Heart right ventricle (tissue), 16 donors: ENCODE measurements at regions of chr1 and their contacts with region 1.

Region 1: DNA sequence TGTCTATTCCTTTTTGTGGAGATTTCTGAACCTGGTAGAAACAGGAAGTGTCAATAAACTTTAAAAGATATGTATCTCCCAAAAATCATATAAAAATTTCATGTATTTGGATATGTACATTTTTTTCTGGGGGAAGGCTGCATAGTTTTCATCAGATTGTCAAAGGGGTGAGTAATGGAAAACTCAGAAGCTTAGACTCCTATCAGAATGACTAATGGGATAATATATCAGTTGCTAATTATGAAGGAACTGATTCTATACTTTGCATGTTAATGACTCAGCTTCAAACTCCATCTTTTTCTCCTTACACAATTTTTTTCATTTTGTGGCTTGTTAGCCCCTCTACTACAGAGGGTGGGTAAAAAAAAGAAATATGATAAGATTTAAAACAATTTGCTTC is 55.9 kb downstream of the GON4L start:
- DNase-seq: no peak
- ATAC-seq: no peak
- H3K4me3 ChIP-seq: no peak overlapping the region
- H3K27ac ChIP-seq: peak overlapping the region in 1 of 10 donors; percentile 14
- H3K4me1 ChIP-seq: peaks cover 0 to 5% (median 0%) of the 10 kb centered on the region in 9 donors
- H3K27me3 ChIP-seq: no peaks in the 10 kb centered on the region
- CTCF ChIP-seq: no peak

Region 2: DNA sequence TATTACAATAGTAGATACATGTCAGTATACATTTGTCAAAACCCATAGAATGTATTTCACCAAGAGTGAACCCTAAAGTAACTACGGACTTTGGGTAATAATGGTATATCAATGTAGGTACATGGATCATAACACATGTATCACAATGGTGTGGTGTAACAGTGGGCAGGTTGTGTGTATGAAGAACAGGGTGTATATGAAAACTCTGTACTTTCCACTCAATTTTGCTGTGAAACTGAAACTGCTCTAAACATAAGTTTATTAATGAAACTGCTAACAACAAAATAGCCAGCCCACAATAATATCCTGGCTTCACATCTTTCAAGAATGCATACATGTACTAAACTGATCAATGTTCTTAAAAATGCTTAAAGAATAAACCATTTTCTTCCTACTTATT is 390.2 kb before region 1 on chr1:
- intact Hi-C with region 1: no loop called
- DNase-seq: no peak
- ATAC-seq: no peak
- H3K4me3 ChIP-seq: no peak overlapping the region
- H3K27ac ChIP-seq: no peak overlapping the region
- H3K4me1 ChIP-seq: no peaks in the 10 kb centered on the region
- H3K27me3 ChIP-seq: no peaks in the 10 kb centered on the region
- CTCF ChIP-seq: no peak

Region 3: GRCh38 chr1:155759966-155760630 is 41.1 kb before region 1 on chr1:
- intact Hi-C with region 1: loop called in 1 of 10 experiments (anchors 5 kb)
- DNase-seq: no peak
- ATAC-seq: no peak
- H3K4me3 ChIP-seq: no peak overlapping the region
- H3K27ac ChIP-seq: no peak overlapping the region
- H3K4me1 ChIP-seq: peaks cover 0 to 13% (median 0%) of the 10 kb centered on the region in 9 donors
- H3K27me3 ChIP-seq: no peaks in the 10 kb centered on the region
- CTCF ChIP-seq: no peak